OCI-LY7 (cell line): ENCODE measurements at regions of chr12 and their contacts with region 1.

Region 1: GRCh38 chr12:95440401-95440800 is 33.6 kb upstream of the METAP2 start:
- DNase-seq: peak; percentile 33
- H3K4me3 ChIP-seq: peak overlapping the region; percentile 20
- H3K27ac ChIP-seq: peak overlapping the region; percentile 93
- H3K4me1 ChIP-seq: peaks cover 62% of the 10 kb centered on the region
- CTCF ChIP-seq: no peak

Region 2: DNA sequence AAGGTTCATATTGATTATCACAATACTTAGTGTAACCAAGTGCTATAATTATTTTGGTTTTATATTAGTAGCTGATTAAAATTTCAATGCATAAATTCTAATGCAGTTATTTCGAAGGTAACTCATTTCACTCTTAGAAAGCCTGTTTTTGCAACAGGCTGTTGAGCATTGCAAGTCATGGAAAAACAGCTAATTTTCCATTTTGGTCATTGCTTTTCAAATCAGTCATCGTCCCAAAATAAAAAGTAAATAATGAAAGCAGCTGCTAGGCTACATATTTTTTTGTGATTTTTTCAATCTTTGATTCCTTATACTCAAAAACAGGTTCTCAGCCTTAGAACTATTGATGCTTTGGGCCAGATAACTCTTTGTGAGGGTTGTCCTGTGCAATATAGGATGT is 199.8 kb before region 1 on chr12:
- CTCF ChIA-PET with region 1: no interaction called
- POLR2A ChIA-PET with region 1: no interaction called
- intact Hi-C with region 1: no loop called
- DNase-seq: no peak
- H3K4me3 ChIP-seq: no peak overlapping the region
- H3K27ac ChIP-seq: no peak overlapping the region
- H3K4me1 ChIP-seq: no peaks in the 10 kb centered on the region
- CTCF ChIP-seq: no peak

Region 3: DNA sequence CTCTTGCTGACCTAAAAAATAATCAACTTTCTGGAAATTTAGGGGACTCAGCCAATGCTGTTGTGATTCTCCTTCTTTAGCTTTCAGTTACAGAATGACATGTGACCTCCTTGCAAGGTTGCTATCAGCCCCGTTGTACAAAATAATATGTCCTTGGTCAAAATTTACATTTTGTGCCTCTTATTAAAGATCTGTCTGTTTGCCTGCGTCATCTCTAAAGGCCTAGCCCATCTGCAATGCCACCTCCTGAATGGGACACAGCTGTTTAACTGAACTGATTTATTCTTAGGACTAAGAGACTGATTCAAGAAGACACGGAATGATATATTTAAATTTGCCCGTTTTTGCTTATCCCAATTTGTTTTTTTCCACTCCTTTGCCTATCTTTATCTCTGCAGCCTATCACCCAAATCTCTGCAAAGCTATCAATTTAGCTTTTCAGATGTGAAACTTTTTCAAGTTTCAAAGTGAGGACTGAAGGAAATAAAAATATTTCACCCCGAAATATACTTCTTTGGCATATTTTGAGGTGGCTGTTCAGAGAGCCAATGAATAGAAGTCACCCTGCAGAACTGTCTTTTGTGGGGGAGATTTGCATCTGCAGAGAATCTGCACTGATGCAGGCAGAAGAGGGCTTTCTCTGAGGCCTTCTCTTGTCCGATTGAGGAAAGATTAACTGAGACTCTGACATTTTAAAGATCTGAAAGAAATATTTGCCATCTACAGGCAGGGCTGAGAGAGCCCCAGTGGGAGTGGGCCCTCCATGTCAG is 96.8 kb before region 1 on chr12:
- CTCF ChIA-PET with region 1: no interaction called
- POLR2A ChIA-PET with region 1: interaction called, 8 read pairs
- intact Hi-C with region 1: loop called (anchors 1 kb)
- DNase-seq: peak; percentile 85
- H3K4me3 ChIP-seq: peak overlapping the region; percentile 29
- H3K27ac ChIP-seq: peak overlapping the region; percentile 94
- H3K4me1 ChIP-seq: peaks cover 92% of the 10 kb centered on the region
- CTCF ChIP-seq: peak; percentile 4; the same call in 1 of the 2 replicates

Region 4: GRCh38 chr12:95351748-95352147 is 88.7 kb before region 1 on chr12:
- CTCF ChIA-PET with region 1: no interaction called
- POLR2A ChIA-PET with region 1: interaction called, 8 read pairs
- intact Hi-C with region 1: loop called (anchors 1 kb)
- DNase-seq: no peak
- H3K4me3 ChIP-seq: no peak overlapping the region
- H3K27ac ChIP-seq: peak overlapping the region; percentile 63
- H3K4me1 ChIP-seq: peaks cover 62% of the 10 kb centered on the region
- CTCF ChIP-seq: no peak

Region 5: DNA sequence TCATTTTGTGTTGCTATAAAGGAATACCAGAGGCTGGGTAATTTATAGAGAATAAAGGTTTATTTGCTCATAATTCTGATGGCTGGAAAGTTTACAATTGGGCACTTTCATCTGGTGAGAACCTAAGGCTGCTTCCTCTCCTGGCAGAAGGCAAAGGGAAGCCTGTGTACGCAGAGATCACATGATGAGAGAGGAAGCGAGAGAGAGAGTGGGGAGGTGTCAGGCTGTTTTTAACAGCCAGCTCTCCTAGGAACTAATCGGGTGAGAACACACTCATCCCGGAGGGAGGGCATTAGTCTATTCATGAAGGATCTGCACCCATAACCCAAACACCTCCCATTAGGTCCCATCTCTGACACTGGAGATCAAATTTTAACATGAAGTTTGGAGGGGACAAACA is 11.9 kb before region 1 on chr12:
- CTCF ChIA-PET with region 1: no interaction called
- POLR2A ChIA-PET with region 1: interaction called, 28 read pairs
- intact Hi-C with region 1: no loop called
- DNase-seq: peak; percentile 85
- H3K4me3 ChIP-seq: peak overlapping the region; percentile 28
- H3K27ac ChIP-seq: peak overlapping the region; percentile 48
- H3K4me1 ChIP-seq: peaks cover 26% of the 10 kb centered on the region
- CTCF ChIP-seq: no peak